HCT116 (cell line): ENCODE measurements at regions of chr22 and their contacts with region 1.

Region 1: DNA sequence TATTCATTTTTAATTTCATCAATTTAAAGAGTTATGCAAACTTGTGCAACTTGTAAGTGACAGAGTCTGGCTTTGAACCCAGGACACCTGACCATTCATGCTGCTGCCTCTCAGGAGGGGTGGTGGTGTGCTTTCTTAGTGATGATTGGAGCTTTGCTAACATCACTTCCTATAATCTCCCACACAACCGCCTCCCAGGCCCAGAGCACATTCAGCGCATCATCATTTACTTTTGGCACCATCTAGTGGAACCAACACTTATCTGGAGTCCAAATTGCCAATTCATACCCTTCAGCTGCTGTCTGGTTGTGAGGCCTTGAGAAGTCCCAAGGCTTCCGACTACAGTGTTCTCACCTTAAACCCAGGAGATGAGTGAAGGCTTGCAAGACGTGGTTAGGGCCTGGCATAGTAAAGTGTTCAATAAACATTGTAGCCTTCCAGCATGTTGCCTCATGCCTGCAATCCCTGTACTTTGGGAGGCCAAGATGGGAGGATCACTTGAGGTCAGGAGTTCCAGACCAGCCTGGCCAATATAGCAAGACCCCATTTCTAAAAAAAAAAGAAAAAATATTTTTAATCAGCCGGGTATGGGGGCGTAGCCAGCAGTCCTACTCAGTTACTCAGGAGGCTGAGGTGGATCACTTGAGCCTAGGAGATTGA is 1.1 kb upstream of the TTLL1 start:
- DNase-seq: peak; percentile 90
- ATAC-seq: peak; percentile 55
- H3K4me3 ChIP-seq: peak overlapping the region; percentile 69 to 93
- H3K27ac ChIP-seq: peak overlapping the region; percentile 68; the same call in 1 of the 2 replicates
- H3K4me1 ChIP-seq: peaks cover 10 to 29% of the 10 kb centered on the region in 2 experiments; a peak in 3 of 4 replicates
- H3K27me3 ChIP-seq: no peaks in the 10 kb centered on the region
- CTCF ChIP-seq: peak; percentile 59 to 88 (median 68); a peak in 5 of 6 replicates
- POLR2A ChIP-seq: no peak
- RAD21 ChIP-seq: peak; percentile 95

Region 2: GRCh38 chr22:42621505-42622002 is 468.7 kb before region 1 on chr22:
- CTCF ChIA-PET with region 1: interaction called, 3 read pairs
- POLR2A ChIA-PET with region 1: no interaction called
- RAD21 ChIA-PET with region 1: interaction called in 1 of 2 experiments, 8 read pairs
- intact Hi-C with region 1: loop called (anchors 2 kb)
- DNase-seq: peak; percentile 50
- ATAC-seq: peak; percentile 94
- H3K4me3 ChIP-seq: no peak overlapping the region
- H3K27ac ChIP-seq: peak overlapping the region; percentile 67
- H3K4me1 ChIP-seq: peaks cover 19 to 30% of the 10 kb centered on the region in 2 experiments
- H3K27me3 ChIP-seq: no peaks in the 10 kb centered on the region
- CTCF ChIP-seq: peak; percentile 80 to 97 (median 97); a peak in 5 of 6 replicates
- POLR2A ChIP-seq: no peak
- RAD21 ChIP-seq: peak; percentile 87

Region 3: GRCh38 chr22:42780070-42780540 is 310.2 kb before region 1 on chr22:
- CTCF ChIA-PET with region 1: interaction called, 4 read pairs
- POLR2A ChIA-PET with region 1: no interaction called
- RAD21 ChIA-PET with region 1: no interaction called
- intact Hi-C with region 1: loop called (anchors 1 kb)
- DNase-seq: peak; percentile 95
- ATAC-seq: peak; percentile 94
- H3K4me3 ChIP-seq: no peak overlapping the region
- H3K27ac ChIP-seq: no peak overlapping the region
- H3K4me1 ChIP-seq: peaks cover 2 to 3% of the 10 kb centered on the region in 2 experiments; a peak in 3 of 4 replicates
- H3K27me3 ChIP-seq: no peaks in the 10 kb centered on the region
- CTCF ChIP-seq: peak; percentile 79 to 98 (median 86)
- POLR2A ChIP-seq: no peak
- RAD21 ChIP-seq: peak; percentile 86

Region 4: DNA sequence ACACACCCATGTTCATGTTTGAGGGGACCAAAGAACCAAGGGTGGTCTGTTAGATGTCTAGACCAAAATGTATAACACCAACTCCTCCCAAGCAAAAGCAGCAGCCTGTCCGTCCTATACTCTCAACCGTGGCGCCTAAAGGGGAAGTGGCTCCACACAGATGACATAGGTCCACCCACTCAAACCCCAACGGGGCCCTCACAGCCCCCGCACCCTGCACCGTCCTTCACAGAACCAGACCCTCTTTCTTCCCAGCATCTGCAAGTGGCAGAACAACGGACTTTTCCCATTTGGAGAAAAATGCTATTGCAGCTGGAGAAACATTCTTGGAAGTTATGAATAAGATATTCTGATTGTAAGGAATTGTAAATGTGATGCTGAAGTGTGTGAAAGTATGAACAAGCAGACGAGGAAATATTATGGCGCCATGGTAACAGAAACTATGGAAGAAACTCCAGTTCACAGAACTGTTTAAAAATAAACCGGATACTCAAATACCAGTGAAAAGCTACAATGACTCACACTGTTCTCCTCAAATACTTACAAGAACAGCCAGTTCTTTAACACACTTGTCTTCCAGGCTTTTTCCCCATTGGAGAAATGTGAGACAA is 156.7 kb before region 1 on chr22:
- CTCF ChIA-PET with region 1: no interaction called
- POLR2A ChIA-PET with region 1: no interaction called
- RAD21 ChIA-PET with region 1: no interaction called
- intact Hi-C with region 1: loop called (anchors 10 kb)
- DNase-seq: no peak
- ATAC-seq: no peak
- H3K4me3 ChIP-seq: no peak overlapping the region
- H3K27ac ChIP-seq: no peak overlapping the region
- H3K4me1 ChIP-seq: peaks cover 27 to 54% of the 10 kb centered on the region in 2 experiments
- H3K27me3 ChIP-seq: no peaks in the 10 kb centered on the region
- CTCF ChIP-seq: no peak
- POLR2A ChIP-seq: no peak
- RAD21 ChIP-seq: no peak